ENCODE measurements at regions of chrX and their contacts with region 1.

Region 1: DNA sequence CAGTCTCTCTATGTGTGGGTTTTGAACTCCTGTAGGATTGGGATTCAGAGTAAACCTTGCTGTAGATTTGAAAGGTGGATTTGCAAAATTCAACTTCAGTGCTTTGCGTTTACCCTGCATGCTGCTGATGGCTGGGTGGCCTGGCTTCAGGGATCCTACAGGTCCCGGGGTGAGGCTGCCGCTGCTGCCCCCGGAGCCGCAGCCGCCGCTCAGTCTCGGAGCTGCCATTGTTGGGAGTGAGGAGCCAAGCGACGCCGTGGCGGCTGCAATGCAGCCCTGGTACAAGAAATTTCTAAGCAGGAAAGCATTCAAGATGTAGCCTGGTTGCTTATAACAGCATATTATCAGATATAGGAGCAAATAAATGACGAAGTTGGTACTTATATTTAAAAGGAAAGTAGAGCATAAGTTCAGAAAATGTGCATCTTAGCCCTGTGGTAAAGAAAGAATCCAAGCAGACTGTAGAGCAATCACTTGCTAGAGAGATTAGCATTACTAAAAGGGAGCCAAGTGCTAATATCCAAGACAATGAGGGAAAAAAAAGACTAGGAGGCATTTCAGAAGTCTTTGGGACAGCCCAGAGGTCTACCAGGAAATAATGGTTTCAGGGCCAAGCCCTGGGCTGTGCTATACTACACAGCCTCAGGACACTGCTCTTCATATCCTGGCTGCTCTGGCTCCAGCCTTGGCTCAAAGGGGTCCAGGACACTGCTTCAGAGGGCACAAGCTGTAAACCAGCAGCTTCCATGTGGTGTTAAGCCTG is 36.9 kb upstream of the CHIC1 start:
- DNase-seq: no peak
- H3K4me3 ChIP-seq: no peak overlapping the region
- H3K27ac ChIP-seq: no peak overlapping the region
- H3K4me1 ChIP-seq: no peaks in the 10 kb centered on the region
- H3K27me3 ChIP-seq: no peaks in the 10 kb centered on the region
- CTCF ChIP-seq: no peak
- EP300 ChIP-seq: no peak
- POLR2A ChIP-seq: no peak

Region 2: DNA sequence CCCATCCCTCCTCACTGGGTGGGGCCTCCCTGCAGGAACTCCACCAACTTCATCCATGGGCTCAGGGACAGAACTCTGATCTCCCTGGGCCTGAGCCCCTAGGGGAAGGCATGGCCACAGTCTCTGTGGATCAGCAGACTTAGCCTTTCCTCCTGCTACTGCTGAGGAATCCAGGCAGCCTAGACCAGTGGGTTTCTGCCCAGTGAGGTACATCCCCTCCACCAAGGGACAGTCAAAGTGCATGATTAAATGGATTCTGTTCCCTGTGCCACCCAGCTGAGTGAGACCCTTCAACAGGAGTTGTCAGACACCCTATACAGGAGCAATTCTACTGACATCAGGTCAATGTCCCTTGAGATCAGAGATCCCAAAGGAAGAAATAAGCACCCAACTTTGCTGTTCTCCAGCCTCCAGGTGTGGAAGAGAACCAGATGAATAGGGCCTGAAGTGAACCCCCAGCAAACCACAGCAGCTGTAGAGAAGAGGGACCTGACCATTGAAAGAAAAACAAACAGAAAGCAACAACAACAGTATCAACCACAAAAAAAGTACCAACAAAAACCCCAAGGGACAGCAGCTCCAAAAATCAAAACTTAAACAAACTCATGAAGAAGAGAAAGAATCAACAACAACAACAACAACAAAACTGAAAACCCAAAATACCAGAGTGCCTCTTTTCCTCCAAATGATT is 121.7 kb after region 1 on chrX:
- in situ Hi-C with region 1: loop called in 1 of 4 experiments (anchors 25 kb)
- intact Hi-C with region 1: no loop called
- DNase-seq: no peak
- H3K4me3 ChIP-seq: no peak overlapping the region
- H3K27ac ChIP-seq: no peak overlapping the region
- H3K4me1 ChIP-seq: no peaks in the 10 kb centered on the region
- H3K27me3 ChIP-seq: no peaks in the 10 kb centered on the region
- CTCF ChIP-seq: no peak
- EP300 ChIP-seq: no peak
- POLR2A ChIP-seq: no peak

Measured in transverse colon (tissue), 4 donors.